Activated T-helper 2 cell treated with anti-CD3 and anti-CD28 coated beads, Interferon-gamma antibody, Interleukin-2, Interleukin-4, amounts not matched to agents 10 μg/mL and 5 μg/mL and 100 μg/mL, durations not matched to agents 14 hours and 24 hours and 36 hours (primary cell): ENCODE measurements at regions of chr1 and their contacts with region 1.

Region 1: DNA sequence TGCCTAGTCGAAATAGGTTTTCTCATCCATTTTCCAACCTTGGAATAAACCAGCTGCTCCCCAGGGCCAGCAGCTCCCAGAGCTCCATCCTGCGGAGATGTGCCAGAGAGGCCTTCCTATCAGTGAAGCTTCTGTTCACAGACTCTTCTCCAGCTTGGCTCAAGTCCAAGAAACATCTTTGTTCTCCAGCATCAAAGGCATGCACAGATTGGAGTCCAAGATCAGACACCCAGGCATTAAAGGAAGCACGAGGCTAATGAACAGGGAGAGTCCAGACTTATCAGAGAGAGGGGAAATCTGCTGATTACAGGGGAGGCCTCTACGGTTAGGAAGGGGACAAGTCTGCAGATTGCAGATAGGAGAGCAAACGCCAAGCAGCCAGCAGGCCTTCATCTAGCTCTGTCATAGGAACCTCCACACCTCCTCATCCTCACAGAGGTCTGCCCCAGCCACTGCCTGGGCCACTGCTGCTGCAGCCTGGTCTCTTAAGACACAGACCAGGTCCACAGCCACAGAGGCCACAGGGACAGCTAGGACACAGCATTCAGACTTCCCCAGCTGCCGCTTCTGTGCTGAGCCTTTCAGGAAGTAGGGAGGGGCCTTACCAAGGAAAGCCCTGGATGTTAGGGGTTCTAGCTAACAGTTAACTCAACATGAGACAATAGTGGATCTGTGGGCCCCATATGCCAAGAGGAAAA is 3.4 kb downstream of the PRR9 start:
- DNase-seq: no peak
- H3K4me3 Mint-ChIP-seq: no peak overlapping the region
- H3K27ac Mint-ChIP-seq: no peak overlapping the region
- H3K4me1 Mint-ChIP-seq: peaks cover 9% of the 10 kb centered on the region
- H3K27me3 Mint-ChIP-seq: peaks cover 10% of the 10 kb centered on the region

Region 2: GRCh38 chr1:151639466-151639865 is 1581.3 kb before region 1 on chr1:
- intact Hi-C with region 1: no loop called
- DNase-seq: no peak
- H3K4me3 Mint-ChIP-seq: no peak overlapping the region
- H3K27ac Mint-ChIP-seq: no peak overlapping the region
- H3K4me1 Mint-ChIP-seq: peaks cover 3% of the 10 kb centered on the region
- H3K27me3 Mint-ChIP-seq: no peaks in the 10 kb centered on the region

Region 3: GRCh38 chr1:152654110-152654509 is 566.6 kb before region 1 on chr1:
- intact Hi-C with region 1: loop called (anchors 10 kb)
- DNase-seq: peak; percentile 35
- H3K4me3 Mint-ChIP-seq: no peak overlapping the region
- H3K27ac Mint-ChIP-seq: no peak overlapping the region
- H3K4me1 Mint-ChIP-seq: peaks cover 2% of the 10 kb centered on the region
- H3K27me3 Mint-ChIP-seq: peaks cover 13% of the 10 kb centered on the region

Region 4: GRCh38 chr1:152869808-152870419 is 350.8 kb before region 1 on chr1:
- intact Hi-C with region 1: loop called (anchors 1 kb)
- DNase-seq: peak; percentile 46
- H3K4me3 Mint-ChIP-seq: no peak overlapping the region
- H3K27ac Mint-ChIP-seq: no peak overlapping the region
- H3K4me1 Mint-ChIP-seq: no peaks in the 10 kb centered on the region
- H3K27me3 Mint-ChIP-seq: peaks cover 5% of the 10 kb centered on the region